A673 (cell line): ENCODE measurements at regions of chr3 and their contacts with region 1.

Region 1: DNA sequence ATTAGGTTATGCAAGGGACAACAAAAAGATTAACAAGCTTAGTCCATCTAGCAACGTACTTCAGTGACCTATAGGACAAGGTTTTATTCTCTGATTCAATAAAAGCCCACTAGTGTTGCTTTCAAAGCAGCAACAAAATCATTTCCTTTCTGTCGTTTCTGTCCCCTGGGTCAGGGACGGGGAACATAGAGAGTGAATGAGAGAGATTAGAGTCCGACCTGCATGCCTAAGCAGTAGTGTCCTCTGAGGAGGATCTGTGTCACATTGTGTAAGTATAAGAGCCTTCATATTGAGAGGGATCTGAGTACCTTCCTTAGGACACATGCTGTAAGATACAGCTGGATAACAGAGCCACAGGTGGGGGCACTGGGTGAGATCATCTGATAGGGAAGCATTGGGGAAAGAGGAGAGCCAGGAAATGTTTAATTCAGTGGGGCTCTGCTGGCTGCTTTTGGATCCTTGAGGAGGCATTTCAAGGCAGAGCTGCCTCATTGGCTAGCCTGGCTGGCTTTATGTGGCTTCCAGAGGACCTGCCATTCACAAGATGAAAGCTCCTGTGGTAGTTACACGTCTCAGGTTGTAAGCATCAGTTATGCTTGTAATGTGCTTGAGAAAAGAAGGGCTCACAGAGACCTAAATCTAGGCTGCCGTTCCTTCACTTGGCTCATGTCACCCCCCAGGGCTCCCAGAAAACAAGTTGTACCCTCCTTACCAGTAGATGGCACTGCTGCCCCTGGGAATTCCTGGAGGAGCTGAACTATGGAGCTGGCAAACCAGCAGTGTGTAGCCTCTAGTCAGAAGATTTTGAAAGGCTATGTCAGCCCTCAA is 2.7 kb downstream of the TMEM108 start:
- DNase-seq: peak; percentile 87
- H3K4me3 ChIP-seq: no peak overlapping the region
- H3K27ac ChIP-seq: no peak overlapping the region
- H3K4me1 ChIP-seq: peaks cover 3% of the 10 kb centered on the region
- H3K27me3 ChIP-seq: peaks cover 64% of the 10 kb centered on the region
- CTCF ChIP-seq: peak; percentile 84

Region 2: GRCh38 chr3:132709761-132710160 is 331.1 kb before region 1 on chr3:
- CTCF ChIA-PET with region 1: no interaction called
- POLR2A ChIA-PET with region 1: no interaction called
- intact Hi-C with region 1: no loop called
- DNase-seq: no peak
- H3K4me3 ChIP-seq: no peak overlapping the region
- H3K27ac ChIP-seq: no peak overlapping the region
- H3K4me1 ChIP-seq: no peaks in the 10 kb centered on the region
- H3K27me3 ChIP-seq: no peaks in the 10 kb centered on the region
- CTCF ChIP-seq: no peak

Region 3: GRCh38 chr3:132730891-132731580 is 309.9 kb before region 1 on chr3:
- CTCF ChIA-PET with region 1: interaction called, 8 read pairs
- POLR2A ChIA-PET with region 1: no interaction called
- intact Hi-C with region 1: loop called (anchors 2 kb)
- DNase-seq: peak; percentile 61
- H3K4me3 ChIP-seq: no peak overlapping the region
- H3K27ac ChIP-seq: no peak overlapping the region
- H3K4me1 ChIP-seq: no peaks in the 10 kb centered on the region
- H3K27me3 ChIP-seq: peaks cover 42% of the 10 kb centered on the region
- CTCF ChIP-seq: peak; percentile 57

Region 4: DNA sequence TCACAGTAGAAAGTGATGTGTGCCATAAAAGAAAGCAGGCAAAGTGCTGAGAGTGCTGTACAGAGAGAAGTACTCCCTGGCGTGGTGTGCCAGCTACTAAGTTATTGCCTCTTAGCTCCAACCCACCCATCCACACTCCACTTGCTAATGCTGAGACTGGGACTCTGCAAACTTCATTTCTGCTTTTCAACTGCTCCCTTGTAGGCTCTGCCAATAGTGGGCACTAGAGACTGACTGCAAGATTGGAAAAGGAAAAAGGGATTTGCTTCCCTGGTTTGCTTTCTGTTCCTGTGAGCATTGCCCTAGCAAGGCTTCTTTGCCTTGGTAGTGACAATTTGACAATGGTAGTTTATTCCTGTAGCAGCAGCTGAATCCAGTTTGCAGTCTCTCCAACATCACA is 59.2 kb before region 1 on chr3:
- CTCF ChIA-PET with region 1: no interaction called
- POLR2A ChIA-PET with region 1: no interaction called
- intact Hi-C with region 1: no loop called
- DNase-seq: no peak
- H3K4me3 ChIP-seq: no peak overlapping the region
- H3K27ac ChIP-seq: no peak overlapping the region
- H3K4me1 ChIP-seq: no peaks in the 10 kb centered on the region
- H3K27me3 ChIP-seq: peaks cover 16% of the 10 kb centered on the region
- CTCF ChIP-seq: no peak

Region 5: GRCh38 chr3:133211449-133211848 is 170.5 kb after region 1 on chr3:
- CTCF ChIA-PET with region 1: interaction called, 10 read pairs
- POLR2A ChIA-PET with region 1: no interaction called
- intact Hi-C with region 1: no loop called
- DNase-seq: peak; percentile 90
- H3K4me3 ChIP-seq: no peak overlapping the region
- H3K27ac ChIP-seq: no peak overlapping the region
- H3K4me1 ChIP-seq: peaks cover 33% of the 10 kb centered on the region
- H3K27me3 ChIP-seq: no peaks in the 10 kb centered on the region
- CTCF ChIP-seq: no peak

Region 6: DNA sequence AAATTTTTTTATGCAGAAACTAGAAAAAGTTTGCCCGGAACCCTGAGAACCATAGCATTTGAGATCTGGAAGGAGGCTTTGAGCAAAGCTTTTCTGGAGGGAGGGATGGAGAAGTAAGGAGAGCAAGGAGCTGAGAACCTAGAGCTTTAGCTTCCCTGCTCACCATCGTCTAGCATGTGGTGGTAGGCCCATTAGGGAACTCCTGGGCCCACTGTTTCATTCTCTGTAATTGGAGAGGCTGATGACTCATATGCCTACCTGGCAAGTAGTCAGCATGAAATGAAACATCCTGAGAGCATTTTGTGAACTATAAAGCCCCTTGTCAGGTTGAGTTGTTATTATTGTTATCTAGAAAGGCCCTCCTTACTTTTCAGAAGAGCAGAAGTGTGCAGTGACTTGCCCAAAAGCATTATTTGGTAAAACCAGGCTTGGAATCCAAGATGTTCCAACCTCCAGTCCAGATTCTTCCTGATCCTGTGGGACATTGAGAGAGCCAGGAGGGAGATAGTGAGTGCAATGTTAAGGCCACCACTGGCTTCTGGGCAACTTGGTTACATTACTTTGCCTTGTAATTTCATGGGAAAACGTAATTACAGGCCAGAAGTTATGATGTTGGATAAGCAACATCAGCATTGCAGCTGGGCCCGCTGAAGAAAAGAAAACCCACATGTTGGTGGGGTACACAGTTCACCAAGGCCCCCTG is 254.4 kb after region 1 on chr3:
- CTCF ChIA-PET with region 1: no interaction called
- POLR2A ChIA-PET with region 1: no interaction called
- intact Hi-C with region 1: no loop called
- DNase-seq: no peak
- H3K4me3 ChIP-seq: no peak overlapping the region
- H3K27ac ChIP-seq: no peak overlapping the region
- H3K4me1 ChIP-seq: peaks cover 49% of the 10 kb centered on the region
- H3K27me3 ChIP-seq: no peaks in the 10 kb centered on the region
- CTCF ChIP-seq: no peak

Region 7: DNA sequence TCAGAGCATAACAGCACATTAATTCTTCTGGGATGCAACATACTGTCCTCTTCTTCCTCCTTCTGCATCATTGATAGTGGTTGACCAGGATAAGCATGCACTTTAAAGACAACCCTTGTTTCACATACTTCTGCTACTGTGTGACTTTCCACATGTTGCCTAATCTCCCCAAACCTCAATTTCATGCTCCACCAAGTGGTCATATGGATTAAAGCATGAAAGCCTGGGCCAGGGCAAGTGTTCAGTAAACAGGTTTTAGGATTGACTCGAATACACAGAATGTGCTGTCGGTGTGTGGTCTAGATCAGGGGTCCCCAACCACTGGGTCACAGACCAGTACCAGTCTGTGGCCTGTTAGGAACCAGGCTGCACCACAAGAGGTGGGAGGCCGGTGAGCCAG is 336.5 kb after region 1 on chr3:
- CTCF ChIA-PET with region 1: interaction called, 13 read pairs
- POLR2A ChIA-PET with region 1: interaction called, 3 read pairs
- intact Hi-C with region 1: loop called (anchors 1 kb)
- DNase-seq: peak; percentile 61
- H3K4me3 ChIP-seq: no peak overlapping the region
- H3K27ac ChIP-seq: no peak overlapping the region
- H3K4me1 ChIP-seq: no peaks in the 10 kb centered on the region
- H3K27me3 ChIP-seq: no peaks in the 10 kb centered on the region
- CTCF ChIP-seq: peak; percentile 54

Region 8: GRCh38 chr3:133384331-133385027 is 343.6 kb after region 1 on chr3:
- CTCF ChIA-PET with region 1: interaction called, 11 read pairs
- POLR2A ChIA-PET with region 1: no interaction called
- intact Hi-C with region 1: loop called (anchors 1 kb)
- DNase-seq: peak; percentile 79
- H3K4me3 ChIP-seq: no peak overlapping the region
- H3K27ac ChIP-seq: no peak overlapping the region
- H3K4me1 ChIP-seq: no peaks in the 10 kb centered on the region
- H3K27me3 ChIP-seq: no peaks in the 10 kb centered on the region
- CTCF ChIP-seq: peak; percentile 91

Region 9: GRCh38 chr3:133426721-133427120 is 385.8 kb after region 1 on chr3:
- CTCF ChIA-PET with region 1: interaction called, 3 read pairs
- POLR2A ChIA-PET with region 1: no interaction called
- intact Hi-C with region 1: loop called (anchors 2 kb)
- DNase-seq: peak; percentile 84
- H3K4me3 ChIP-seq: no peak overlapping the region
- H3K27ac ChIP-seq: no peak overlapping the region
- H3K4me1 ChIP-seq: peaks cover 8% of the 10 kb centered on the region
- H3K27me3 ChIP-seq: no peaks in the 10 kb centered on the region
- CTCF ChIP-seq: no peak